Activated CD8-positive, alpha-beta T cell treated with anti-CD3 and anti-CD28 coated beads for 36 hours (primary cell): ENCODE measurements at regions of chrX and their contacts with region 1.

Region 1: DNA sequence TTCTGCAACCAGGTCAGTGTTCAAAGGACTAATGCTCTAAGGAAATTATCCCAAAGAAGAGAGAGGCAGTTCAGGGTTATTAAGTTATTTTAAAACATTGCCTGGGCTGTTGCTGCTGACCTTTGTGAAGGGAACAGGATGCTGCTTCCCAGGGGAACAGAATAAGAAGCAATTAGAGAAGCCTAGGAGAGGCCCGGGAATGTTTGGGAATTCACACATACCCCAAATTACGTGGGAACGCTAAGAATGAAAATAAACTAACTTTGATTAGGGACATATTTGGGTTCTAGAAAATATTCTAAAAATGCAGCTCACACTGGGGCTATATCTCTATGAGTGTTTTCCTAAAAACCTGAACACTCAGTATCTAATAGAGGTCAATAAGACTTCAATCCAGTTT is 243.1 kb upstream of the FTHL17 start:
- DNase-seq: no peak
- ATAC-seq: no peak
- H3K4me3 Mint-ChIP-seq: no peak overlapping the region
- H3K27ac Mint-ChIP-seq: no peak overlapping the region
- H3K4me1 Mint-ChIP-seq: no peaks in the 10 kb centered on the region
- H3K27me3 Mint-ChIP-seq: no peaks in the 10 kb centered on the region
- CTCF ChIP-seq: no peak

Region 2: DNA sequence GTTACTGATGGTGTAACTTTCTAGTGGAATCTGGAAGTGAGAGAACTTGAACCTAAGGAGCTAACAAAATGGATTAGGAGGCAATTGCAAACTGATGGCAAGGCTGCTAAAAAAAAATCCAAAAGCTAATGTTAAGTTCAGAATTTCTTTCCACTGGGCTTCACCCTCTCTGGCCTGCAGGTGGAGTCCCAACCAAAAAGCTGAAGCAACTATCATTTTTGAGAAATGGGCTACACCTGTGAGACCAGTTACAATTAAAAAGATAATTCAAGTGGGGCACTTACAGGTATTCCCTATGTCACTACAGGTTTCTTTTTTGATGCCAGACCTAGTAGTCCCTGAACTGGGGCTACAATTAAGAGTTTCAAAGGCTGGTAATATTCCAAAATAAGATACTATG is 101.0 kb before region 1 on chrX:
- CTCF ChIA-PET with region 1: no interaction called
- POLR2A ChIA-PET with region 1: no interaction called
- intact Hi-C with region 1: no loop called
- DNase-seq: peak; percentile 4
- ATAC-seq: no peak
- H3K4me3 Mint-ChIP-seq: no peak overlapping the region
- H3K27ac Mint-ChIP-seq: no peak overlapping the region
- H3K4me1 Mint-ChIP-seq: no peaks in the 10 kb centered on the region
- H3K27me3 Mint-ChIP-seq: no peaks in the 10 kb centered on the region
- CTCF ChIP-seq: no peak

Region 3: DNA sequence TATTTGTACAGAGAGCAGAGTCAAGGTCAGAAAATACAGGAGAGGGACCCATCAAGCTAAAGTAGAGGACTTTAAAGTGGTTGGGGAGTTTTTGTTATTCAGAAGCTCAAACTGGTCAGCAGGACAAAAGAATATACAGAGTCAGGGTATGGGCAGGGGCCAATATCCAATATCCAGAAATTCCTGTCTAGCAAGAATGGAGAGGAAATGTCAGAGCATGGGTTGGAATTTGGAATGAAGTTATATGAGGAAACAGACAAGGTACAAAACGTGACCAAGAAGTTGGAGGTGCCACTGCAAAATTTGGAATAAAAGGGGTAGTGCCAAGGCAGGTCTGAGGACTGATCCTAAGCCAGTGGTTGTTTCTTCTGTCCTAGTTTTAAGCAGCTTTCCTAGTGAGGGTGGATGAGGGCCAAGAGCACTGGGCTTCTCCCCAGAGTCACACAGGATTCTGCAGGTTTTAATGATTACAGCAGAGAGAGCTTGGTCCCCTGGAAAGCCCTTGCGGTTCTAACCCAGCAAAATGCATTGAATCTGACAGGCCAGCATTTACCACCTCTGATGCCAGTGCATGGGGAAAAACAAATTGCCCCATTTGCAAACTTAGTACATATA is 61.6 kb after region 1 on chrX:
- CTCF ChIA-PET with region 1: no interaction called
- POLR2A ChIA-PET with region 1: no interaction called
- intact Hi-C with region 1: loop called (anchors 10 kb)
- DNase-seq: no peak
- ATAC-seq: no peak
- H3K4me3 Mint-ChIP-seq: no peak overlapping the region
- H3K27ac Mint-ChIP-seq: no peak overlapping the region
- H3K4me1 Mint-ChIP-seq: no peaks in the 10 kb centered on the region
- H3K27me3 Mint-ChIP-seq: no peaks in the 10 kb centered on the region
- CTCF ChIP-seq: no peak